Gastrocnemius medialis (tissue), 4 donors: ENCODE measurements at regions of chr10 and their contacts with region 1.

Region 1: GRCh38 chr10:107072786-107073185 is 91.7 kb downstream of the SORCS1 start:
- DNase-seq: no peak
- ATAC-seq: no peak
- H3K4me3 ChIP-seq: no peak overlapping the region
- H3K27ac ChIP-seq: no peak overlapping the region
- H3K4me1 ChIP-seq: no peaks in the 10 kb centered on the region
- H3K27me3 ChIP-seq: no peaks in the 10 kb centered on the region
- CTCF ChIP-seq: no peak
- POLR2A ChIP-seq: no peak

Region 2: DNA sequence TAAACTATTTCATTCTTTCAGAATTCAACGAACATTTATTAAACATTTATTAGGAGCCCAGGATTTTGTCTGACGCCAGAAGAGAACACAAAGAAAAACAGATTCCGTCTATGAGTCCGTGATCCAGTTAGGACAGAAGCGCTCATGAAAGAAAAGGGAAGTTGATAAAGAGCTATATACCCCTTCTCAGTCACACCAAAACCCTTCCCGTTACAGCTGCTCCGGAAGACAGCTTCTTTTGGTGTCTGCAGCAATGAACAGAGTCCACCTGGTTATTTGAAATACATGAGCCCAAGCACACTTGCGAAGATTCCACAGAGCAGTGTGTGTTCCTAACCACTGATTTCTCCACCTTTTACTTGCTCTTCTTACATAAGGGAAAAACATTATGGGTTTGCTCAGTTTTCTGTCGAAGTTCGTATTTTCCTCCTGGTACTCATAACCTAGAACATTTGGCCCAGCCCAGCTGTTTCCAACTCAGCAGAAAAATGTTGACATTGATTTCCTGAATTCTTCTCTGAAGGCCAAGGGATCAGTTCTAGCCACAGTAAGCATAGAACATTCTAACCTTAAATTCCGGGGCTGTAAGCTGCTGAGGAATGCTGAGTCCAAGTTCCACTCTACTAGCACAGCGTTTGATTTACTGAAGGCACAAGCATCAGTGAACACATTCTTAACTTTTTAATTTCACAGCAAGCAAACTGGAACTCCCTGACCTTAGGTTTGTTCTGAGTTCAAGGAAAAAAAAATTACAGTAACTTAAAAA is 114.8 kb before region 1 on chr10:
- in situ Hi-C with region 1: loop called in 1 of 4 experiments (anchors 25 kb)
- intact Hi-C with region 1: no loop called
- DNase-seq: no peak
- ATAC-seq: no peak
- H3K4me3 ChIP-seq: no peak overlapping the region
- H3K27ac ChIP-seq: no peak overlapping the region
- H3K4me1 ChIP-seq: no peaks in the 10 kb centered on the region
- H3K27me3 ChIP-seq: no peaks in the 10 kb centered on the region
- CTCF ChIP-seq: no peak
- POLR2A ChIP-seq: no peak